Breast epithelium (tissue), 4 donors: ENCODE measurements at regions of chr11 and their contacts with region 1.

Region 1: DNA sequence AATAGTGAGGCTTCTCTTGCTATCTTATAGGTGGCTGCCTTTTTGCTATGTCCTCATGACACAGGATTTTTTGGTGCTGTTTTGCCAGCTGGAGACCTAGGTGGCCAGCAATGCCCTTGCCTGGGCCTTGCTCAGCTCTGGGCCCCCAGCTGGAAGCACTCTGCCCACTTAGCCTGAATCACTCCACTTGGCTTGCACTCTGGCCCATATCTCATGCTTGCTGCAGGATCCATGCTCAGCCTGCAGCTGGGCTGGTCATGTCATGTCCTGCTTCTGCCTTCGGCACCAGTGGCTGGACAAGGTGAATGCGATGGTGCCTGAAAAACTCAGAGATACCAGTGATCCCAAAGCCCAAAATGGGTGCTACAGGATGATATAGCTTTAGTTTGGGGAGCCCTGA is 818.6 kb upstream of the FAT3 start:
- DNase-seq: no peak
- H3K4me3 ChIP-seq: no peak overlapping the region
- H3K27ac ChIP-seq: no peak overlapping the region
- H3K4me1 ChIP-seq: no peaks in the 10 kb centered on the region
- H3K27me3 ChIP-seq: no peaks in the 10 kb centered on the region
- CTCF ChIP-seq: no peak
- POLR2A ChIP-seq: no peak

Region 2: GRCh38 chr11:90364527-90364926 is 1041.5 kb before region 1 on chr11:
- intact Hi-C with region 1: no loop called
- DNase-seq: no peak
- H3K4me3 ChIP-seq: no peak overlapping the region
- H3K27ac ChIP-seq: no peak overlapping the region
- H3K4me1 ChIP-seq: no peaks in the 10 kb centered on the region
- H3K27me3 ChIP-seq: no peaks in the 10 kb centered on the region
- CTCF ChIP-seq: no peak
- POLR2A ChIP-seq: no peak

Region 3: DNA sequence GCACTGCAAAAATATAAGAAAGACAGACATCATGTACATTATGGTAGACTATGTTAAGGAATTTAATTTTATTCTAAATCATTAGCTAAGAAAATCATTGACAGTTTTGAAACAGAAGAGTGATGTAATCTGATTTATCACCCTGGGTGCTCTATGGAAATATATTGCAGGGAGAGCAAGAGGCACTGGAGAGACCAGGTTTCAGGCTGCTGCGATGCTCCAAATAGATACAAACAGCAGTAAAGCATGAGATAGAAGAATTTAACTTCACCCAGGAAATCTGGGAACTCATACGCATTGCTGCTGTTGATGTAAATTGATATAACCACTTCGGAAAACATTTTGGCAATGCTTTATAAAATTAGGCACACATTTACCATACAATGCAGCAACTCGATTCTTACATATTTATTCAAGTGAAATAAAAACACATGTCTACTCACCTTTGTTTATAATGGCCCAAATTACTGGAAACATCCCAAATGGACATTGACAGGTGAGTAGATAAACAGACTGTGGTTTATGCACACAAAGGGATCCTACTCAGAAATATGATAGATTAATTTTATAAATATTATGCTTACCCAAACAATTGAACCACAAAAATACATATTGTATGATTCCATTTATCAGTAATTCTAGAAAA is 648.0 kb before region 1 on chr11:
- intact Hi-C with region 1: no loop called
- DNase-seq: no peak
- H3K4me3 ChIP-seq: no peak overlapping the region
- H3K27ac ChIP-seq: no peak overlapping the region
- H3K4me1 ChIP-seq: no peaks in the 10 kb centered on the region
- H3K27me3 ChIP-seq: no peaks in the 10 kb centered on the region
- CTCF ChIP-seq: no peak
- POLR2A ChIP-seq: no peak

Region 4: GRCh38 chr11:91312541-91312940 is 93.5 kb before region 1 on chr11:
- intact Hi-C with region 1: no loop called
- DNase-seq: no peak
- H3K4me3 ChIP-seq: no peak overlapping the region
- H3K27ac ChIP-seq: no peak overlapping the region
- H3K4me1 ChIP-seq: no peaks in the 10 kb centered on the region
- H3K27me3 ChIP-seq: no peaks in the 10 kb centered on the region
- CTCF ChIP-seq: no peak
- POLR2A ChIP-seq: no peak

Region 5: DNA sequence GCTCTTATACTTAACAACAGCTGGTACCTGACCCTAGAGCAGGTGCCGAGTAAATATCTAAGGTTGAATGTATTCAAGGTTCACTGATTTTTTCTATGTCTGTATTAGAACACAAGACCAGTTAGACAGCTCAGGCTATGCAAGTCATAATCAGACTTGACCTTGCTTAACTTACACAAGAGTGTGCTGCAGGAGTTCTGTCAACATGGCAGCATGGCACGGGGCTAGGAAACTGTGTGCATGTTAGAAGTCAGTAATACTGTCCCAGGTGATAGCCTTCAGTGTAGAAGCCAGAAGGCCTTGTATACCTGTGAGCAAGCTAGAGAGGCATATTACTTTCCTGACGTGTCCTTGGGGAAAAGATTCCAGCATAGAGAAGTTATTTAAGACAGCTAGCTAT is 1071.7 kb after region 1 on chr11:
- intact Hi-C with region 1: loop called (anchors 5 kb)
- DNase-seq: no peak
- H3K4me3 ChIP-seq: no peak overlapping the region
- H3K27ac ChIP-seq: no peak overlapping the region
- H3K4me1 ChIP-seq: no peaks in the 10 kb centered on the region
- H3K27me3 ChIP-seq: no peaks in the 10 kb centered on the region
- CTCF ChIP-seq: no peak
- POLR2A ChIP-seq: no peak